GM10248 (cell line): ENCODE measurements at regions of chr20 and their contacts with region 1.

Region 1: GRCh38 chr20:43514062-43514999 is 6.8 kb downstream of the L3MBTL1 start:
- DNase-seq: peak; percentile 97
- CTCF ChIP-seq: peak; percentile 22

Region 2: GRCh38 chr20:43404880-43405279 is 109.5 kb before region 1 on chr20:
- CTCF ChIA-PET with region 1: no interaction called
- POLR2A ChIA-PET with region 1: no interaction called
- DNase-seq: peak; percentile 42
- CTCF ChIP-seq: peak; percentile 31

Region 3: GRCh38 chr20:43442282-43442880 is 72.0 kb before region 1 on chr20:
- CTCF ChIA-PET with region 1: no interaction called
- POLR2A ChIA-PET with region 1: no interaction called
- DNase-seq: no peak
- CTCF ChIP-seq: no peak

Region 4: GRCh38 chr20:43530321-43531090 is 16.2 kb after region 1 on chr20:
- CTCF ChIA-PET with region 1: interaction called, 13 read pairs
- POLR2A ChIA-PET with region 1: interaction called, 7 read pairs
- DNase-seq: no peak
- CTCF ChIP-seq: no peak

Region 5: GRCh38 chr20:43545837-43546578 is 31.7 kb after region 1 on chr20:
- CTCF ChIA-PET with region 1: no interaction called
- POLR2A ChIA-PET with region 1: no interaction called
- DNase-seq: no peak
- CTCF ChIP-seq: no peak

Region 6: GRCh38 chr20:43767686-43768474 is 253.5 kb after region 1 on chr20:
- CTCF ChIA-PET with region 1: no interaction called
- POLR2A ChIA-PET with region 1: no interaction called
- DNase-seq: no peak
- CTCF ChIP-seq: no peak